ENCODE measurements at regions of chr2 and their contacts with region 1.

Region 1: GRCh38 chr2:171271386-171271785 is 110.7 kb upstream of the TLK1 start:
- DNase-seq: no peak
- ATAC-seq: no peak
- H3K4me3 ChIP-seq: no peak overlapping the region
- H3K27ac ChIP-seq: peak overlapping the region; percentile 73
- H3K4me1 ChIP-seq: peaks cover 16% of the 10 kb centered on the region
- H3K27me3 ChIP-seq: no peaks in the 10 kb centered on the region
- CTCF ChIP-seq: no peak

Region 2: DNA sequence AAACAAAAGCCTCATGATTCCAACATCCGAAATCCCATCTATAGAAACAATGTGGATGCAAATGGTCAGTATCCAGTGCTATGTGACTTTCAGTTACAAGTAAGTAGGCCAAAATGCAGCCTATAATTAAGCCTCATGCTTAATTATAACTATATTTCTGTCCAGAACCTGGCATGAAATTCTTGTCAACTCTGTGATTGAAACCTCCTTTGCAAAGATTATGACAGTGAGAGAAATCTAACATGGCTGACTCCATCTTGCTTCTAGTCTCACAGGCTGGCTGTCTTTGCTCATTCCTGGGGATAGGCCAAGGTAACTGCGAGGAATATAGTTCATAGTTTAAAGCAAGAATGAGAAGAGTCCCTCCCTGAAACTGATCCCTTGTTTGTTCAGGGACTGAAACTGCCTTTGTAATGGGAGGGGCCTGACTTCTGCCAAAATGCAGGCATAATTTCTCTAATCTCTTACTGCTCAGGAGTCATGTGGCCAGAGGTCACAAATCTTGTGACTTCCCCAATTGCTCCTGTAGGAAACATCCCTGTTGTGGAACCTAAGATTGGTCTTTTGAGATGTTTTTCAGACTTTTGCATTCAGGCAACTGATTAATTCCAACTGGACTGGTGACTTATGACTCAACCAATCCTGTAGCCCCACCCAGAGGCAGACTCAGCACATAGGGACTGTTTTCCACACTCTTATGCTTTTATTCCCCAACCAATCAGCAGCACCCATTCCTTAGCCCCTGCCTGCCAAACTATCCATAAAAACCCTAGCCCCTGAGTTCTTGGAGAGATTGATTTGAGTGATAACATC is 26.2 kb before region 1 on chr2:
- CTCF ChIA-PET with region 1: interaction called, 12 read pairs
- POLR2A ChIA-PET with region 1: no interaction called
- in situ Hi-C with region 1: no loop called
- intact Hi-C with region 1: no loop called
- DNase-seq: no peak
- ATAC-seq: no peak
- H3K4me3 ChIP-seq: no peak overlapping the region
- H3K27ac ChIP-seq: no peak overlapping the region
- H3K4me1 ChIP-seq: no peaks in the 10 kb centered on the region
- H3K27me3 ChIP-seq: no peaks in the 10 kb centered on the region
- CTCF ChIP-seq: no peak